ENCODE measurements at regions of chr13 and their contacts with region 1.

Region 1: GRCh38 chr13:55361141-55361540 is 1779.6 kb upstream of the PRR20A start:
- DNase-seq: no peak
- H3K4me3 ChIP-seq: no peak overlapping the region
- H3K27ac ChIP-seq: no peak overlapping the region
- H3K4me1 ChIP-seq: no peaks in the 10 kb centered on the region
- H3K27me3 ChIP-seq: no peaks in the 10 kb centered on the region
- CTCF ChIP-seq: no peak

Region 2: GRCh38 chr13:55347528-55347927 is 13.6 kb before region 1 on chr13:
- CTCF ChIA-PET with region 1: no interaction called
- POLR2A ChIA-PET with region 1: no interaction called
- intact Hi-C with region 1: loop called (anchors 1 kb)
- DNase-seq: no peak
- H3K4me3 ChIP-seq: no peak overlapping the region
- H3K27ac ChIP-seq: no peak overlapping the region
- H3K4me1 ChIP-seq: no peaks in the 10 kb centered on the region
- H3K27me3 ChIP-seq: no peaks in the 10 kb centered on the region
- CTCF ChIP-seq: no peak